ENCODE measurements at regions of chr17 and their contacts with region 1.

Region 1: DNA sequence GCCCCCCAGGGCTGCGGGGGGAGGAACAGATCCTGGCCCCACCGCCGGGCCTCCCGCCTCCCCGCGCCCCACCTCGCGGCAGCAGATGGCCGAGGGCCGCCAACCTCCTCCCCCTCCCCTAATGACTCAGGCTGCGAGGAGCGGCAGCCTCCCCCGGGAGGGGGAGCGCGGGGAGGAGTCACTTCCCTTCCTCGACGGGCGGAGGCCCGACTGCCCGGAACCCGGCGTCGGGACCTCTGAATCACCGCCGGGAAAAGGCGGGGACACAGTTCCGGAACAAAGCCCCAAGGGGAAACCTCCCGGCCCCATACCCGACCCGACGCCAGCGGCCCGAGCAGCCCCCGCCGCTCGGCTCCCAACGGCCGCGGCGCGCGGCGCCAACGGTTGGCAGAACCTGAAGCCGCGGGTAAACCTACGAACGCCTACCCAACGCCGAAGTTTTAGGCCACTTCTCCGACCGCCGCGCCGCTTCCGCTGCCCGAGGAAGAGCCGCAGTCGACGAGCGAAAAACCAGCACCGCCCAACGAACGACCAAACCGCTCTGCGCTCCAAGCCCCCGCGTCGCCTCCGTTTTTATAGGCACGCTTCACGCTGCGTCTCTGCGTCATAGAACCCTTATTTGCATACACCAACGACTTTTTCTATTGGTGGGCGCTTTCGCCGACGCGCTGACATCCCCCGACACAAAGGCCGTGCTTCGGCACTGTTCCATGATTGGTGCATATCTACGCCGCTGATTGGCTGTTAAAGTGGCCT is 5.2 kb upstream of the UNK start:
- DNase-seq: peak; percentile 96
- ATAC-seq: peak; percentile 69
- H3K4me3 Mint-ChIP-seq: peak overlapping the region; percentile 98
- H3K27ac Mint-ChIP-seq: peak overlapping the region; percentile 99
- H3K4me1 Mint-ChIP-seq: peaks cover 46% of the 10 kb centered on the region
- H3K27me3 Mint-ChIP-seq: peaks cover 1% of the 10 kb centered on the region

Region 2: DNA sequence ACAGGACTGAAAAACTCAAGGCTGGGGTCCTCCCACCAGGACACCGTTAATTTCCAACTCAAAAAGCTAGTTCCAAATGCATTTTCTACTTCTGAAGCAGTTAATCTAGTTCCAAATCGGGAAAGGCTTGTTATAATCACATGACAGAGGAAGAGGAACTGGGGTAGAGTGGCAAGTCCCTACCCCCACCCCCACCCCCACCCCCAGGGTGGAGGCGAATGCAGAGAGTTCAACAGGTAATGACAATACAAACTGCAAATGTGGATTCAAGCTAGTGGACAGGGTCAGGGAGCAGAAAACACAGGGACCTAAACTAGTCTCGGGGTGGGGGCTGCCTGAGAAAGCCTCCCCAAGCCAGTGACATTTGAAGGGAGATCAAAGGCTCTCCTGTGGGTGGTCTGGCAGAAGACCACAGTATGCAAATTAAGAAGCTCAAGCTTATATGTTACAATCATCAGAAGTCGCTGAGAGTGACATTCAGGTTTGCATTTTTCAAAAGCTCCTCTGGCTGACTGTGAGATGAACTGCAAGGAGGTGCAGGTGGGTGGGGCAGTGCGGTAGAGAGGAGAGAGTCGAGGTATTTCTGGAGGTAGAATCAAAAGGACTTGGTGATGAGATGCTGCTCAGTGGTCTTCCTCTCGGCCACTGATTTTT is 433.8 kb before region 1 on chr17:
- CTCF ChIA-PET with region 1: no interaction called
- POLR2A ChIA-PET with region 1: no interaction called
- intact Hi-C with region 1: no loop called
- DNase-seq: peak; percentile 74
- ATAC-seq: peak; percentile 58
- H3K4me3 Mint-ChIP-seq: peak overlapping the region; percentile 60
- H3K27ac Mint-ChIP-seq: peak overlapping the region; percentile 90
- H3K4me1 Mint-ChIP-seq: peaks cover 97% of the 10 kb centered on the region
- H3K27me3 Mint-ChIP-seq: no peaks in the 10 kb centered on the region

Region 3: DNA sequence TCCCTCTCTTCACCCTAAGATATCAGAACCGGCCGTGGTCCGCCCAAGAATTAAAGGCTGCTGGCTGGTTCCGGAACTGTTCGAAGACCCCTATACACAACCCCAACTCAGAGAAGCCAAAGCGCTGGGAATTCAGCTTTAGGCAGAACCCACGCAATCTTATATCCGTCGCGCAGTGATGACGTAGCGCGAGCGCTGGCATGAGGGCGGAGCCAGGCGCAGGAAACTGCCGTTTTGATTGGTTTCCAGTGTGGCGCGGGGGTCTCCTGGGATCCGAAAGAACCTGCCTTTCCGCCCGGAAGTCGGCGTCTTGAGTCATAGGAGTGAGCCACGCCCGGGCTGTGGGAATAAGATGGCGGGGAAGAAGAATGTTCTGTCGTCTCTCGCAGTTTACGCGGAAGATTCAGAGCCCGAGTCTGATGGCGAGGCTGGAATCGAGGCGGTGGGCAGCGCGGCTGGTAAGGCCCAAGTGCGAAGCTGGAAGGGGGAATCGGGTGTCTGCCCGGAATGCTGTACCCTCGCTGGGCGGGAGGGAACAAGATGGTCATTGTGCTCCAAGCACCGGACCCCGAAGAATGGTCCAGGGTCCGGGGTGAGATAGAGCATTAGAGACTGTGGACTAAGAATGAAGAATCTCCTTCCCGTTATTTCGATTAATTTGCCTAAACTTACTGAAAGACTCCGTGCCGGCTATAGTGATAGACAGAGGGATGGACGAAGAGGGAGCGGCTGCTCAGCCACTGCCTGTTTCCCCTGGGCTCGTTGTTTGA is 112.2 kb before region 1 on chr17 and contains the starts of genes RECQL5 and SAP30BP:
- CTCF ChIA-PET with region 1: interaction called, 6 read pairs
- POLR2A ChIA-PET with region 1: interaction called, 3 read pairs
- intact Hi-C with region 1: loop called in 1 of 2 experiments (anchors 1 kb)
- DNase-seq: peak; percentile 99
- ATAC-seq: peak; percentile 100
- H3K4me3 Mint-ChIP-seq: no peak within 1 kb of the TSS
- H3K27ac Mint-ChIP-seq: no peak within 1 kb of the TSS
- H3K4me1 Mint-ChIP-seq: peaks cover 34% of the 10 kb centered on the region
- H3K27me3 Mint-ChIP-seq: no peaks in the 10 kb centered on the region
- total RNA-seq, gene RECQL5: 36.4 to 40.5 TPM
- total RNA-seq, gene SAP30BP: 87.8 to 100.0 TPM